Tibial artery (tissue), 4 donors: ENCODE measurements at regions of chr2 and their contacts with region 1.

Region 1: DNA sequence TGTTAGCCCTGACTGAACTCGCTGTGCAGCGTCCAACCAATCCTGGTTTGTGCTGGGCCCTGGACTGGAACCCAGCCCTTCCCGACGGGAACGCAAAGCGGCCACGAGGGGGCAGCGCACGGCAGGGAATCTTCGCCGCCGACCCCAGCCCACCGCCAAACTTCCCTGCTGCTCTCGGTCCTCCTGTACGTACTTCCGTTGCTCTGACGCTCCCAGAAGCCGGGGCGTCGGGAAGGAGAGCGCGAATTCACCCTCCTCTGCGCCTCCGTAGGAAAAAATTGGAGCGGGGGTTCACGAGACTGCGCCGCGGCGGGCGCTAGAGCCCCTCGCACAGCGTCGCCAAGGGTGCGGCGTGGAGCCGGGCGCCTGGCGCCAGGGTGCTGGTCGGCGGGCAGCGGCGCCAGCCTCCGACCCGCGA is 948 bp upstream of the SH3RF3 start:
- DNase-seq: peak; percentile 77 to 90
- H3K4me3 ChIP-seq: peak overlapping the region; percentile 62 to 85
- H3K27ac ChIP-seq: peak overlapping the region; percentile 86 to 93
- H3K4me1 ChIP-seq: peaks cover 0 to 48% (median 12%) of the 10 kb centered on the region in 4 donors
- H3K27me3 ChIP-seq: no peaks in the 10 kb centered on the region
- CTCF ChIP-seq: peak; percentile 87 to 96

Region 2: DNA sequence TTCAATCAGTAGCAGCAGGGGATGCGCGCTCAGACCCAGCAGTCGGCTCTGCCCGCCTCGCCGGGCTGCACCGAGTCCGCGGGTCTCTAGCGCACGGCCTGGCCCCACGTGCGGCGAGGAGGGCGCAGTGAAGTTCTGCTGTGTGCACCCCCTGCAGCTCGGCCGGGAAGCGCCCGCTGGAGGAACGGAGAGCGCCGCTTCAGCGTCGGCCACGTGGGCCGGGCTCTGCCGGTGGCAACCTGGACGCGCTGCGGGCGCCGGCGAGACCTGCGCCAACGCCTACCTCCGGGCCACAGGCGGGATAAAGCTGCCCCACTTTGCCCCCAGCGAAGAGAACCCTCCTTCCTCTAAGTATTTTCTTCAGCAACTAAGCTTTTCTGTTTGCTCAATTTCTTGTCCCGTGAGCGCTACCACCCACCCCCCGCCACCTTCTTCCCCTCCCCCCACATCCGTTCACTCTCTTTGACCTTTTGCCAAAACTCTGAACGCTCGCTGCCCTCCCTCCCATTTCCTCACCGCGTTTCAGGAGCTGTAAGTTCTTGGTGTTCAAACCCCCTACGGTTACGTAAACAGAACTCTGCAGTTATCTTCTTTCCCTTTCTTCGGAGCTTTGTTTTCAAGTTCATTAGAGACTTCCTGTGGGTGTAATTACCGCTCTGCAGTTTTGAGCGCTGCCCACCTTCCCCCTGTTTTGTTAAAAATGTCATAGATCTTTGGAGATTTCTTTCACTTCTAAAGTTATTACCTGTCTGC is 96.4 kb before region 1 on chr2:
- intact Hi-C with region 1: no loop called
- DNase-seq: no peak
- H3K4me3 ChIP-seq: peak overlapping the region; percentile 30 to 43
- H3K27ac ChIP-seq: no peak overlapping the region
- H3K4me1 ChIP-seq: peaks cover 0 to 13% (median 5%) of the 10 kb centered on the region in 4 donors
- H3K27me3 ChIP-seq: peaks cover 0 to 21% of the 10 kb centered on the region in 2 donors
- CTCF ChIP-seq: no peak

Region 3: GRCh38 chr2:109173311-109174171 is 45.5 kb after region 1 on chr2:
- intact Hi-C with region 1: loop called (anchors 2 kb)
- DNase-seq: peak; percentile 93 to 96
- H3K4me3 ChIP-seq: peak overlapping the region in 1 of 2 donors; percentile 14
- H3K27ac ChIP-seq: peak overlapping the region; percentile 91 to 94
- H3K4me1 ChIP-seq: peaks cover 6 to 89% (median 59%) of the 10 kb centered on the region in 4 donors
- H3K27me3 ChIP-seq: no peaks in the 10 kb centered on the region
- CTCF ChIP-seq: no peak

Region 4: GRCh38 chr2:109510136-109511028 is 382.3 kb after region 1 on chr2:
- intact Hi-C with region 1: loop called (anchors 2 kb)
- DNase-seq: peak; percentile 87 to 88
- H3K4me3 ChIP-seq: no peak overlapping the region
- H3K27ac ChIP-seq: no peak overlapping the region
- H3K4me1 ChIP-seq: peaks cover 0 to 24% (median 20%) of the 10 kb centered on the region in 4 donors
- H3K27me3 ChIP-seq: no peaks in the 10 kb centered on the region
- CTCF ChIP-seq: peak; percentile 92 to 94